ENCODE measurements at regions of chr15 and their contacts with region 1.

Region 1: GRCh38 chr15:40217159-40217824 is 21.6 kb upstream of the PAK6 start:
- DNase-seq: peak; percentile 71
- H3K4me3 ChIP-seq: no peak overlapping the region; a peak in 1 of 4 replicates
- H3K27ac ChIP-seq: no peak overlapping the region
- H3K4me1 ChIP-seq: no peaks in the 10 kb centered on the region
- H3K27me3 ChIP-seq: no peaks in the 10 kb centered on the region
- CTCF ChIP-seq: peak; percentile 89
- EP300 ChIP-seq: no peak
- RAD21 ChIP-seq: peak; percentile 95

Region 2: DNA sequence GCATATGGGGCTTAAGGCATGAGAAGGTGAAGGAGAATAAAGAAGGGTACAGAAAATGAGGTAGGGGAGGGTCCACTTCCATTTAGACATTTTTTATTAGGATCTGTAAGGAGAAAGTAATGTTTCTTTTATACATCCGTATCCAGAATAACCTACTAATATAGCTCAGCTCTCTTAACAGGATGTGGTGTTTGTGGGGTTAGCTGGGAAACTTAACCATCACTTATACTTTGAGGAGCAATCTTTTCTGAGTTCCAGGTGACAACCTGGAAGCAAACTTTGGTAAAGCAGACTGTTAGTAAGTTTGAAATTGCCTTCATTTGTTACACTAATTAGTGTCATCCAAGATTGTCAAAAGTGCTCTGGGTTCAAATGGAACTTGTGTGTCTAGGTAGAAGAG is 19.9 kb before region 1 on chr15:
- CTCF ChIA-PET with region 1: interaction called, 37 read pairs
- POLR2A ChIA-PET with region 1: no interaction called
- DNase-seq: no peak
- H3K4me3 ChIP-seq: no peak overlapping the region
- H3K27ac ChIP-seq: no peak overlapping the region
- H3K4me1 ChIP-seq: no peaks in the 10 kb centered on the region
- H3K27me3 ChIP-seq: no peaks in the 10 kb centered on the region
- CTCF ChIP-seq: no peak
- EP300 ChIP-seq: no peak
- RAD21 ChIP-seq: no peak

Region 3: GRCh38 chr15:40238532-40239403 is 21.5 kb after region 1 on chr15 and contains the start of gene PAK6:
- CTCF ChIA-PET with region 1: interaction called, 32 read pairs
- POLR2A ChIA-PET with region 1: interaction called, 3 read pairs
- DNase-seq: peak; percentile 92
- H3K4me3 ChIP-seq: peak within 1 kb of the TSS; percentile 40 to 56
- H3K27ac ChIP-seq: no peak within 1 kb of the TSS
- H3K4me1 ChIP-seq: peaks cover 5 to 24% of the 10 kb centered on the region in 2 experiments; a peak in 2 of 4 replicates
- H3K27me3 ChIP-seq: peaks cover 3% of the 10 kb centered on the region; the same call in 1 of the 2 replicates
- CTCF ChIP-seq: no peak
- EP300 ChIP-seq: no peak
- RAD21 ChIP-seq: no peak
- polyA plus RNA-seq, gene PAK6: 0.07 and 0.16 TPM in 2 replicates

Region 4: DNA sequence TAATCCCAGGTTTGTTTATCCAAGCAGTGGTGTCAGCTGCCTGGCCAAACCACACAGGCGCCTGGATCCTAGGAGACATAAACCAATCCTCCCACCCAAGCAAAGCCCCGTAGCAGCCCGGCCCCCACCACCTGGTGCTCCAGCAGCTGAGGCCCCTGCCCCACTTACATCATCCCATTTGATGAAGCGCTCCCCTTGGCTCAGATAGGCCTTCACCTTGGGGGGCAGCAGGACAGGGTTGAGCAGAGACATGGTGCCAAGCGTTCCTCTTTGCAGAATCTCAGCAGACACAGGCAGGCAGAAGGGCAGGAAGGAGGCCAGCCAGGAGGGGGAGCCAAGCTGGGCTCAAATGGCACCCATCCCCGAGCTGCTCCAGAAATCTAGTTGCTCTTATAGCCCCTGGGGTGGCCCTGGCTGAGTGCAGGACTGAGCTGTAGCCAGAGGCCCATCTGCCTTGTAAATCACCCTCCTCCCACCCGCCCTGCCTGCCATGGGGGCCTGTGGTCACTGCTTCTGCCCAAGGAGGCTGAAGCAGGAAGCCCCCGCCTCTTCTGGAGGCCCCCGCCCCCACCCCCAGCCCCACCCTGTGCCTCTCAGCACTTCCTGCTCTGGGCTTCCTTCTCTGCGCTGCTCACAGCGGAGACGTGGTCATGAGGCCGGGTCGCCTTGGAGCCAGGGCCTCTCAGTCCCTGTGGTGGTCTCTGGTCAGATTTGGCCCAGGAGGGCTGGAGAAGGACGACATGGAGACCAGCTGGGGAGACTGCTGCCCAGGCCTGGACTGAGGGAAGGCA is 90.3 kb after region 1 on chr15 and contains the start of gene PLCB2:
- CTCF ChIA-PET with region 1: interaction called, 65 read pairs
- POLR2A ChIA-PET with region 1: no interaction called
- DNase-seq: no peak
- H3K4me3 ChIP-seq: no peak within 1 kb of the TSS
- H3K27ac ChIP-seq: no peak within 1 kb of the TSS
- H3K4me1 ChIP-seq: peaks cover 0 to 11% of the 10 kb centered on the region in 2 experiments; a peak in 1 of 4 replicates
- H3K27me3 ChIP-seq: no peaks in the 10 kb centered on the region; the same call in 1 of the 2 replicates
- CTCF ChIP-seq: peak; percentile 26; the same call in 1 of the 2 replicates
- EP300 ChIP-seq: no peak
- RAD21 ChIP-seq: no peak
- polyA plus RNA-seq, gene PLCB2: 0.15 TPM in 2 replicates

Region 5: DNA sequence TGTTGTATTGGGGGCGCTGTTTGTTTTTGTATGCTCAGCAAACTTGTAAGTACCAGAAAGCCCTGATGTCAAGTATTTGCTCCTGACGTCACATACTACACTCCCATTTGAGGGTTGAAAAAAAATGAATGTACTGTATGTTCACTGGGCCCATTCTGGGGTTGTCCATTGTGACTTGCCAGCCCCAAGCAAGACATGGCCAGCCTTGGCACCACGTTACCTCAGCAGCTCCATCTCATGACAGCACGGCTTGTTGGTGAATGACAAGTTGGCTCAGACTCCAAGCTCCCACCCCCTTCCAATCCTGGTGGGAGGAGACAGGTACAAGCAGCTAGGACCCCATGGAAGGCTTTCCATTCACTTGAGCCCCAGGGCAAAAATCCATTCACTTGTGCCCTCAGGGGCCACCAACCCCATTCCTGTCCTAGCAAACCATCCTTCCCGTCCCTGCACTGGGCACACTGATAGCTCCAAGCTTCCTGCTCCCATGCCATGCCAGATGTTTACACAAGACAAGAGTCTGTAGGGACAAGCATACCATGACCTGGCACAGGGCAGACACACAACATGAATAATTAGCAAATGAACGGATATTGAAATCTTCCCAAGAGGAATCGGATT is 135.1 kb after region 1 on chr15:
- CTCF ChIA-PET with region 1: no interaction called
- POLR2A ChIA-PET with region 1: no interaction called
- DNase-seq: no peak
- H3K4me3 ChIP-seq: no peak overlapping the region
- H3K27ac ChIP-seq: no peak overlapping the region
- H3K4me1 ChIP-seq: peaks cover 0 to 20% of the 10 kb centered on the region in 2 experiments; a peak in 2 of 4 replicates
- H3K27me3 ChIP-seq: no peaks in the 10 kb centered on the region
- CTCF ChIP-seq: no peak
- EP300 ChIP-seq: no peak
- RAD21 ChIP-seq: no peak

Region 6: GRCh38 chr15:40564591-40565332 is 347.5 kb after region 1 on chr15 and contains the start of gene CCDC32:
- CTCF ChIA-PET with region 1: no interaction called
- POLR2A ChIA-PET with region 1: no interaction called
- DNase-seq: peak; percentile 94
- H3K4me3 ChIP-seq: peak within 1 kb of the TSS; percentile 74 to 87
- H3K27ac ChIP-seq: peak within 1 kb of the TSS; percentile 75 to 87
- H3K4me1 ChIP-seq: peaks cover 2 to 4% of the 10 kb centered on the region in 2 experiments; a peak in 3 of 4 replicates
- H3K27me3 ChIP-seq: no peaks in the 10 kb centered on the region
- CTCF ChIP-seq: no peak
- EP300 ChIP-seq: peak in 1 of 2 experiments; percentile 33; a peak in 1 of 4 replicates
- RAD21 ChIP-seq: no peak
- polyA plus RNA-seq, gene CCDC32: 7.4 and 8.2 TPM in 2 replicates